Sciatic nerve (tissue), 2 donors: ENCODE measurements at regions of chr9 and their contacts with region 1.

Region 1: DNA sequence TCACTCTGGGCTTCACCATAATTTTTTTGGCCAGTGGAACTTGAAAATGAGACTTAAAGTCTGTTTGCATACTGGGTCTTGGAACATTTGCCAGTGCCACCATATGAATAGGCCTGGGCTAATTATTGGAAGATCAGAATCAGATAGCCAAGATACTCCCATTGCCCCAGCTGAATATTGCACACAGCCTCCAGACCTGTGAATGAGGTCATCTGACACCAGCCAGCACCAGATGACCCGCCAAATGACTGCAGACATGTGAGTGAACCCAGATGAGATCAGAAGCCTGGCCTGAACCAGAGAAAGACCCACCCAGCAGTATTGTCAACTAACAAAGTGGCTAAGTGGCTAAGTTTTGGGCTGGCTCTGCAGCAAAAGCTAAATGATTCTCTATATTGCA is 220.5 kb upstream of the MPDZ start:
- DNase-seq: no peak
- ATAC-seq: peak; percentile 62

Region 2: DNA sequence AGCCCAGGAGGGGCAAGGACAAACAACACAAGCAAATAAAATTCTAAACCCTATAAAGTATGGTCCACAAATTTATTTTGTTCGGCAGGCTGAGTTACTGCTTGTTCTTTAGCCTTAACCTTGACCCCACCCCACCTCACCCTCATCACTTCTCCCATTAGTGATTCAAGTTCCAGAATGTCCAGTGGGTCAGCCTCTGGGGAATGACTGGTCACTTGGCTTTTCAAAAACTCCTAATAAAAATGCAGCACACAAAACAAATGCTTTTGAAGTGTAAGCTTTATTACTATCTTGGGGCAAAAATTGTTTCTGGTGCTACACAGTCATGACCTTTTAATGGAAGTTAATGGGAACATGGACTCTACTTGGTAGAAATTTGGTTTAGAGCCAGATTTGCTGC is 362.6 kb before region 1 on chr9:
- intact Hi-C with region 1: no loop called
- DNase-seq: no peak
- ATAC-seq: no peak

Region 3: GRCh38 chr9:13470836-13471235 is 29.2 kb before region 1 on chr9:
- intact Hi-C with region 1: loop called (anchors 2 kb)
- DNase-seq: no peak
- ATAC-seq: no peak

Region 4: DNA sequence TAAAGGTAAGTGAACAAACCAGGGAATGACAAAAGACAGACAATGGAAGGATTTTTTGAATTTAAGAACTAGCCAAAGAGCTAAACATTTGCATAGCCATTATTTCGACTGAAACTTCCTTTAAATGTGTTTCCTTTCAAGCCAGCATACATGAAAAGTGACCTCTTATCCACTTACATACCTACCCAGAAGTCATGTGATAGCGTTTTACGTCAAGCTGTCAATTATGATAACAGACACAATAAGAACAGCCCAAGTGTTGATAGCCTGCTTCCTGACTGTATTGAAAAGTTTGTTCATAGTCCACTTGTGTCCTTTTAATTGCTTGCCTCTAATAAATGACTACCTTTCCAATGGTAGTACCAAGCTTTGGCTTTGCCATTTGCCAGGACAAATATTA is 607.9 kb after region 1 on chr9:
- intact Hi-C with region 1: no loop called
- DNase-seq: no peak
- ATAC-seq: no peak

Region 5: DNA sequence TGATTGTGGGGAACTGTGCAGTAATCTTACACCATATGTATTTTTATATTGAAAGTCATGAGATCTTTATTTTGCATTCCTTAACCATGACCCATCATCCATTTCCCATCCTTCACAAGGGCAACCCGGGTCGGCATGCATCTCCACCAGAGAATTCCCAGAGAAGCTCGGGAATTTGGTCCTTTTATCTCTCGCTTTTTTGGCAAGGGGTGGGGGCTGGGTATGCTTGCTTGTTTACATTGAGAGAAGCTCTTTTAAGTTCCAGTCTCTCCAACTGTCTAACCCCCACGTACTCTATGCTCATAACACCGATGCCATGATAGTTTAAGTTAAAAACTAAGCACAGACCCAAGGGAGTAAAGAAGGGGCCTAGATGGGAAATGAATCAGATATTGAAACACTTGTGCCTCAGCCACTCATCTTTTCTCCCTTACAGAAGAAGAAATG is 923.8 kb after region 1 on chr9:
- intact Hi-C with region 1: no loop called
- DNase-seq: no peak
- ATAC-seq: no peak